ENCODE measurements at regions of chr7 and their contacts with region 1.

Region 1: GRCh38 chr7:96303686-96304443 is 18.0 kb downstream of the SLC25A13 start:
- DNase-seq: no peak
- ATAC-seq: peak; percentile 54
- H3K4me3 ChIP-seq: peak overlapping the region; percentile 9 to 54 (median 30); a peak in 5 of 6 replicates
- H3K27ac ChIP-seq: peak overlapping the region; percentile 77
- H3K4me1 ChIP-seq: peaks cover 97% of the 10 kb centered on the region
- H3K27me3 ChIP-seq: no peaks in the 10 kb centered on the region
- CTCF ChIP-seq: no peak
- EP300 ChIP-seq: no peak
- POLR2A ChIP-seq: no peak
- RAD21 ChIP-seq: no peak

Region 2: DNA sequence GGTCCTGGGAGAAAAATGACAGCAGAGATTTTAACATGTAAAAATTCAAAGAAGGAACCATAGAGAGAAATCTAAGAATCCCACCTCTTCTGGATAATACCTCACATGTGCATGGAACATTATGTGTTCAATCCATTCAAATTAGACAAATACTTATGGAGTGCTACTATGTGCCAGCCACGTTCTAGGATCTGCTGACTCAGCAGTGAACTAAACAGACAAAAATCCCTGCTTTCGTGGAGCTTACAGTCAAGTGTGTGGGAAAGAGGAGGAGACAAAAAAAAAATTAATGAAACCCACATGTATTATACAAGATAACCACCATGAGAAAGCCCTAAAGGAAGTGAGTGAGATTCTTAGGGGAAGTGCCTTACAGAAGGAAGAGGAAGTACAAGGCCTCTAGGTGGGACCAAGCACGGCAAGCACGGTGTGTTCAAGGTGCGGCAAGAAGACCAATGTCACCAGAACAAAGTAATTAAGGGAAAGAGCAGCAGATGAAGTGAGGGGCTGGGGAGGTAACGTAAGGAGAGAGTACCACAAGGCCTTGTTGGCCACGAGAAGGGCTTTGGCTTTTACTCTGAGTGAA is 53.0 kb before region 1 on chr7:
- CTCF ChIA-PET with region 1: no interaction called
- POLR2A ChIA-PET with region 1: no interaction called
- in situ Hi-C with region 1: no loop called
- intact Hi-C with region 1: loop called (anchors 10 kb)
- DNase-seq: no peak
- ATAC-seq: no peak
- H3K4me3 ChIP-seq: no peak overlapping the region
- H3K27ac ChIP-seq: no peak overlapping the region
- H3K4me1 ChIP-seq: peaks cover 40% of the 10 kb centered on the region
- H3K27me3 ChIP-seq: no peaks in the 10 kb centered on the region
- CTCF ChIP-seq: no peak
- EP300 ChIP-seq: no peak
- POLR2A ChIP-seq: no peak
- RAD21 ChIP-seq: no peak

Measured in HepG2 (cell line).